ENCODE measurements at regions of chr17 and their contacts with region 1.

Region 1: GRCh38 chr17:77404812-77405581 is 264.2 kb downstream of the SEC14L1 start:
- DNase-seq: peak; percentile 66 to 94 (median 81)
- ATAC-seq: peak; percentile 80
- H3K4me3 ChIP-seq: peak overlapping the region; percentile 82
- H3K4me3 Mint-ChIP-seq: peak overlapping the region; percentile 91
- H3K27ac ChIP-seq: peak overlapping the region; percentile 86 to 92
- H3K27ac Mint-ChIP-seq: peak overlapping the region; percentile 96
- H3K4me1 ChIP-seq: peaks cover 99% of the 10 kb centered on the region
- H3K4me1 Mint-ChIP-seq: peaks cover 92% of the 10 kb centered on the region
- H3K27me3 ChIP-seq: no peaks in the 10 kb centered on the region
- H3K27me3 Mint-ChIP-seq: no peaks in the 10 kb centered on the region
- CTCF ChIP-seq: no peak

Region 2: DNA sequence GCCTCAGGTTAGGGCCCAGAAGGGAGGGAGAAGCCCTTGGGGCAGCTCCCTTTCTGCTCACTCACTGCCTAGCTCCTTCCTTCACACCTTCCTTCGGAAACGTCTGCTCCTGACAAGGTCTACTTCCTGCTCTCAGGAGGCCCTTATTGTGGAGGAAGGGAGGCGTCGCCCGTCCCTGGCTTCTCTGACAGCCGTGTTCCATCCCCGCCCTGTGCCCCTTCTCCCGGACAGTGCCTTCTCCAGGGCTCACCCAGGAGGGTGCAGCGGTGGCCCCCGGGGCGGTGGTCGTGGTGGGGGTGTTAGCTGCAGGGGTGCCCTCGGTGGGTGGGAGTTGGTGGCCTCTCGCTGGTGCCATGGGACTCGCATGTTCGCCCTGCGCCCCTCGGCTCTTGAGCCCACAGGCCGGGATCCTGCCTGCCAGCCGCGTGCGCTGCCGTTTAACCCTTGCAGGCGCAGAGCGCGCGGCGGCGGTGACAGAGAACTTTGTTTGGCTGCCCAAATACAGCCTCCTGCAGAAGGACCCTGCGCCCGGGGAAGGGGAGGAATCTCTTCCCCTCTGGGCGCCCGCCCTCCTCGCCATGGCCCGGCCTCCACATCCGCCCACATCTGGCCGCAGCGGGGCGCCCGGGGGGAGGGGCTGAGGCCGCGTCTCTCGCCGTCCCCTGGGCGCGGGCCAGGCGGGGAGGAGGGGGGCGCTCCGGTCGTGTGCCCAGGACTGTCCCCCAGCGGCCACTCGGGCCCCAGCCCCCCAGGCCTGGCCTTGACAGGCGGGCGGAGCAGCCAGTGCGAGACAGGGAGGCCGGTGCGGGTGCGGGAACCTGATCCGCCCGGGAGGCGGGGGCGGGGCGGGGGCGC is 32.3 kb before region 1 on chr17:
- CTCF ChIA-PET with region 1: interaction called, 20 read pairs
- POLR2A ChIA-PET with region 1: interaction called, 57 read pairs
- intact Hi-C with region 1: loop called in 1 of 2 experiments (anchors 5 kb)
- DNase-seq: peak in 13 of 14 experiments; percentile 30 to 78 (median 58)
- ATAC-seq: peak; percentile 25
- H3K4me3 ChIP-seq: peak overlapping the region; percentile 100
- H3K4me3 Mint-ChIP-seq: peak overlapping the region; percentile 93
- H3K27ac ChIP-seq: peak overlapping the region; percentile 45 to 60
- H3K27ac Mint-ChIP-seq: peak overlapping the region; percentile 91
- H3K4me1 ChIP-seq: peaks cover 73% of the 10 kb centered on the region
- H3K4me1 Mint-ChIP-seq: peaks cover 75% of the 10 kb centered on the region
- H3K27me3 ChIP-seq: no peaks in the 10 kb centered on the region
- H3K27me3 Mint-ChIP-seq: no peaks in the 10 kb centered on the region
- CTCF ChIP-seq: no peak

Region 3: GRCh38 chr17:77420804-77421629 is 16.0 kb after region 1 on chr17:
- CTCF ChIA-PET with region 1: interaction called, 74 read pairs
- POLR2A ChIA-PET with region 1: interaction called, 368 read pairs
- intact Hi-C with region 1: no loop called
- DNase-seq: peak; percentile 44 to 82 (median 66)
- ATAC-seq: peak; percentile 69
- H3K4me3 ChIP-seq: peak overlapping the region; percentile 31
- H3K4me3 Mint-ChIP-seq: peak overlapping the region; percentile 83
- H3K27ac ChIP-seq: peak overlapping the region; percentile 61 to 76
- H3K27ac Mint-ChIP-seq: peak overlapping the region; percentile 89
- H3K4me1 ChIP-seq: peaks cover 92% of the 10 kb centered on the region
- H3K4me1 Mint-ChIP-seq: peaks cover 65% of the 10 kb centered on the region
- H3K27me3 ChIP-seq: no peaks in the 10 kb centered on the region
- H3K27me3 Mint-ChIP-seq: no peaks in the 10 kb centered on the region
- CTCF ChIP-seq: no peak

Region 4: DNA sequence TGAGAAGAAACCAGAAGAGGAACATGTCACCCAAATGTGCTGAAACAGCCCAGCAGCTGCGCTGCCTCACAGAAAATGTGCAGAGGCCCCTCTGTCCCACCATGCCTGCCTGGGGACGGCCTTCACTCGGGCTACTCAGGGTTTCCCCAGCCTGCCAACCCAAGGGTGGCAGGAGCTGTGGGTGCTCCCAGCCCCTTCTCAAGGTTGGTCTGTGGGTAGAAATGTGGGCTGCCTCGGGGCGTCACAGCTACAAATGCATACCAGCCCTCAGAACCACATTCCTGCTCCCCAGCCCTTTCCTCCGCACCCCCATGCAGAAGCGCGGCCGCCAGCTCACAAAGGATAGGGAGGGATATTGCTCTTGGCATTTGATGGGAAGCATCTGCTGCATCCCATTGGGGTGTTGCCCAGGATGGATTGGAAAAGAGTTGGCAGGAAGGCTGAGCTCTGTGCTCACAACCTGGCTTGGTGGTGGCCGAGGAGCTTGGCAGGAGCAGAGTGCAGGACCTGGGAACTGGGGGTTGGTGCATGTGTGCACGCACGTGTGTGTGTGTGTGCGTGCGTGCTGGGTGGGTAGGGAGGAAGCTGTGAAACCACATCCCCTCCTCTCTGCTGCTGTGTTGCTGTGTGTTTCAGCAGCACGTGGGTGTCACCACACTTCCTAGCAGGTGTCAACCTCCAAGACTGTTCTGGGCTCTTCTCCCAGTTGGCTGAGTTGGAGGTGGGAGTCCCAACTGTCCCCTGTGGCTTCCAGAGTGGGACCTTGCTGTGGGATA is 40.2 kb after region 1 on chr17:
- CTCF ChIA-PET with region 1: interaction called, 32 read pairs
- POLR2A ChIA-PET with region 1: interaction called, 38 read pairs
- intact Hi-C with region 1: loop called in 1 of 2 experiments (anchors 2 kb)
- DNase-seq: peak; percentile 72 to 97 (median 83)
- ATAC-seq: peak; percentile 68
- H3K4me3 ChIP-seq: peak overlapping the region; percentile 55
- H3K4me3 Mint-ChIP-seq: peak overlapping the region; percentile 89
- H3K27ac ChIP-seq: peak overlapping the region; percentile 73 to 98
- H3K27ac Mint-ChIP-seq: peak overlapping the region; percentile 93
- H3K4me1 ChIP-seq: peaks cover 100% of the 10 kb centered on the region
- H3K4me1 Mint-ChIP-seq: peaks cover 98% of the 10 kb centered on the region
- H3K27me3 ChIP-seq: no peaks in the 10 kb centered on the region
- H3K27me3 Mint-ChIP-seq: no peaks in the 10 kb centered on the region
- CTCF ChIP-seq: no peak

Region 5: DNA sequence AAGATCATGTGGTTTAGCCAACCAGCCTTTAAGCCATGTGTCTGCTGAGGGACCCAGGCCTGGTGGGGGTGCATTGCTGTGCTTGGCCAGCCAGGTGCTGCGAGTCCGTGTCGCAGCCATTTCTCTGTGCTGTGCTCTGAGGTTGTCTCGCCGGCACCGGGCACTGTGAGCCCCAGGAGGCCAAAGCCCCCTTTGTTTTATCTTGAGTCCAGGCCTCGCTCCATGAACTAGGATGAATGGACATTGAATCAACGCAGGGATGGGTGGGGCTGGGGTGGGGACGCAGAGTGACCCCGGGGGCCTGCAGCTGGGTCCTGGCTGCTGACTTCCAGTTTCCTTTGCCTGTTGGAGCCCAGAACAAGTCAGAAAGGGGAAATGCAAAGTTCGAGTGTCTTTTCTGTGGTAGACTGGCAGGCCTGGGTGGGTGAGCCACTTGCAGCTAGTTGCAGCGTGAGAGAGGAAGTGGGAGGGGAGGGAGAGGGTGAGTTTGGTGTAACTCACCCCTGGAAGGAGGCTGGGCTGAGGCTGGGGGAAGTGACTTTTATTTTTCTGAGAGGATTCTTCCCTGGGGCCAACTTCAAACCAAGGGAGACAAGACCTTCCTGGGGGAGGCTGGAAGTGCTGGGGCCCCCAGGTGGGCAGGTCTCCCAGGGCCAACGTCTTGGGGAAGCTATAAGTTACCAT is 60.5 kb after region 1 on chr17:
- CTCF ChIA-PET with region 1: interaction called, 11 read pairs
- POLR2A ChIA-PET with region 1: interaction called, 32 read pairs
- intact Hi-C with region 1: no loop called
- DNase-seq: peak; percentile 63 to 91 (median 78)
- ATAC-seq: peak; percentile 93
- H3K4me3 ChIP-seq: peak overlapping the region; percentile 39
- H3K4me3 Mint-ChIP-seq: peak overlapping the region; percentile 85
- H3K27ac ChIP-seq: peak overlapping the region; percentile 58 to 74
- H3K27ac Mint-ChIP-seq: peak overlapping the region; percentile 96
- H3K4me1 ChIP-seq: peaks cover 100% of the 10 kb centered on the region
- H3K4me1 Mint-ChIP-seq: peaks cover 84% of the 10 kb centered on the region
- H3K27me3 ChIP-seq: no peaks in the 10 kb centered on the region
- H3K27me3 Mint-ChIP-seq: no peaks in the 10 kb centered on the region
- CTCF ChIP-seq: no peak

Region 6: GRCh38 chr17:77494664-77495435 is 89.9 kb after region 1 on chr17:
- CTCF ChIA-PET with region 1: interaction called, 49 read pairs
- POLR2A ChIA-PET with region 1: interaction called, 9 read pairs
- intact Hi-C with region 1: loop called (anchors 1 kb)
- DNase-seq: peak; percentile 55 to 89 (median 71)
- ATAC-seq: peak; percentile 79
- H3K4me3 ChIP-seq: no peak overlapping the region
- H3K4me3 Mint-ChIP-seq: no peak overlapping the region
- H3K27ac ChIP-seq: peak overlapping the region; percentile 3 to 40
- H3K27ac Mint-ChIP-seq: peak overlapping the region; percentile 71
- H3K4me1 ChIP-seq: peaks cover 57% of the 10 kb centered on the region
- H3K4me1 Mint-ChIP-seq: peaks cover 7% of the 10 kb centered on the region
- H3K27me3 ChIP-seq: no peaks in the 10 kb centered on the region
- H3K27me3 Mint-ChIP-seq: no peaks in the 10 kb centered on the region
- CTCF ChIP-seq: peak; percentile 99

Measured in CD4-positive, alpha-beta T cell (primary cell).